A549 (cell line): ENCODE measurements at regions of chr16 and their contacts with region 1.

Region 1: GRCh38 chr16:15777533-15778203 is 79.2 kb downstream of the MYH11 start:
- DNase-seq: peak; percentile 74 to 79
- ATAC-seq: peak; percentile 92 to 97
- H3K4me3 ChIP-seq: no peak overlapping the region
- H3K27ac ChIP-seq: peak overlapping the region in 1 of 2 experiments; percentile 61; a peak in 3 of 6 replicates
- H3K4me1 ChIP-seq: no peaks in the 10 kb centered on the region
- CTCF ChIP-seq: peak; percentile 77
- EP300 ChIP-seq: no peak
- POLR2A ChIP-seq: no peak
- RAD21 ChIP-seq: peak; percentile 86 to 96

Region 2: GRCh38 chr16:15765880-15766279 is 11.8 kb before region 1 on chr16:
- CTCF ChIA-PET with region 1: interaction called, 18 read pairs
- POLR2A ChIA-PET with region 1: no interaction called
- DNase-seq: peak; percentile 58 to 69
- ATAC-seq: peak; percentile 92 to 94
- H3K4me3 ChIP-seq: no peak overlapping the region
- H3K27ac ChIP-seq: no peak overlapping the region
- H3K4me1 ChIP-seq: no peaks in the 10 kb centered on the region
- CTCF ChIP-seq: peak; percentile 78
- EP300 ChIP-seq: no peak
- POLR2A ChIP-seq: no peak
- RAD21 ChIP-seq: peak; percentile 75 to 89

Region 3: DNA sequence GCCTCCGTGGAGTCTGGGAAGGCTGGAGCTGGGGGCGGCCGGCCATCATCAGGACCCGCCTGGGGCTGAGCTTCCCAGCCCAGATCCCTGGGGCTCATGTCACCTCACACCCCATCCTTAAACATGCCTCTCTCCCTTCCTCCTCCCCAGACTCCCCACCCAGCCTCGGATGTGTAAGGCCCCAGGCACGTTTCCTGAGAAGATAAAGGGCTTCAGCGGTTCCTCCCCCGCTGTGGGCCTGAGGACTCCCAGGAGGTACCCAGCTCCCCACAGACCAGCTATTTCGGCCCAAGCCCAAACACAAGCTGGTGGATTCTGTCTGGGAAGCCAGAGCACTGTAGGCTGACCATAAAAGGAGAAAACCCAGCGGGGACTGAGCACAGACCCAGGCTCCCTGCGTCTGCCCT is 29.9 kb after region 1 on chr16:
- CTCF ChIA-PET with region 1: interaction called, 13 read pairs
- POLR2A ChIA-PET with region 1: no interaction called
- DNase-seq: no peak
- ATAC-seq: no peak
- H3K4me3 ChIP-seq: no peak overlapping the region
- H3K27ac ChIP-seq: no peak overlapping the region
- H3K4me1 ChIP-seq: no peaks in the 10 kb centered on the region
- CTCF ChIP-seq: no peak
- EP300 ChIP-seq: no peak
- POLR2A ChIP-seq: no peak
- RAD21 ChIP-seq: no peak

Region 4: DNA sequence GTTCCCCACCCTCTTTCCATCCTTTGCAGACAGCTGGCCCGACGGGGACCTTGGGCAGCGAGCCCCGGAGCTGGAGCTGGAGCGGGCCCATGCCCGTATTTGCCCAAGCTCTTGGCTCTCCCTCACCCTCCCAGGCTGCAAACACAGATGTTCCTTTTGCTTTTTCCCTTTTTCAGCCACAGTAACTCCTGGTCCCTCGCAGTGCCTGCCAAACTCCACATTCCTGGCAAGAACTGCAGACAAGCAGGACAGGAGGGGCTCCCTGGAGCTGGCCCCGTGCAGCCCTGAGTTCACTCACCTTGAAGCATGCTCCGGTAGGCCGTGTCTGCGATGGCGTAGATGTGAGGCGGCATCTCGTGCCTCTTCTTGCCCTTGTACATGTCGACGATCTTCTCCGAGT is 45.3 kb after region 1 on chr16:
- CTCF ChIA-PET with region 1: interaction called, 36 read pairs
- POLR2A ChIA-PET with region 1: no interaction called
- DNase-seq: no peak
- ATAC-seq: peak in 1 of 2 experiments; percentile 23; a peak in 1 of 6 replicates
- H3K4me3 ChIP-seq: no peak overlapping the region
- H3K27ac ChIP-seq: no peak overlapping the region
- H3K4me1 ChIP-seq: no peaks in the 10 kb centered on the region
- CTCF ChIP-seq: no peak
- EP300 ChIP-seq: no peak
- POLR2A ChIP-seq: no peak
- RAD21 ChIP-seq: no peak

Region 5: GRCh38 chr16:16127469-16128116 is 349.9 kb after region 1 on chr16:
- CTCF ChIA-PET with region 1: interaction called, 12 read pairs
- POLR2A ChIA-PET with region 1: no interaction called
- DNase-seq: peak; percentile 82 to 87
- ATAC-seq: peak; percentile 86 to 91
- H3K4me3 ChIP-seq: no peak overlapping the region
- H3K27ac ChIP-seq: peak overlapping the region in 1 of 2 experiments; percentile 69; a peak in 3 of 6 replicates
- H3K4me1 ChIP-seq: no peaks in the 10 kb centered on the region; the same call in 2 of the 3 replicates
- CTCF ChIP-seq: peak; percentile 71
- EP300 ChIP-seq: no peak
- POLR2A ChIP-seq: no peak
- RAD21 ChIP-seq: peak; percentile 83 to 90